ENCODE measurements at regions of chr3 and their contacts with region 1.

Region 1: GRCh38 chr3:171284308-171285075 is 175.7 kb downstream of the TNIK start:
- DNase-seq: peak in 1 of 2 donors; percentile 86
- H3K4me3 ChIP-seq: no peak overlapping the region
- H3K27ac ChIP-seq: peak overlapping the region; percentile 75 to 83
- H3K4me1 ChIP-seq: peaks cover 0 to 28% of the 10 kb centered on the region in 2 donors
- H3K27me3 ChIP-seq: no peaks in the 10 kb centered on the region
- CTCF ChIP-seq: no peak

Region 2: DNA sequence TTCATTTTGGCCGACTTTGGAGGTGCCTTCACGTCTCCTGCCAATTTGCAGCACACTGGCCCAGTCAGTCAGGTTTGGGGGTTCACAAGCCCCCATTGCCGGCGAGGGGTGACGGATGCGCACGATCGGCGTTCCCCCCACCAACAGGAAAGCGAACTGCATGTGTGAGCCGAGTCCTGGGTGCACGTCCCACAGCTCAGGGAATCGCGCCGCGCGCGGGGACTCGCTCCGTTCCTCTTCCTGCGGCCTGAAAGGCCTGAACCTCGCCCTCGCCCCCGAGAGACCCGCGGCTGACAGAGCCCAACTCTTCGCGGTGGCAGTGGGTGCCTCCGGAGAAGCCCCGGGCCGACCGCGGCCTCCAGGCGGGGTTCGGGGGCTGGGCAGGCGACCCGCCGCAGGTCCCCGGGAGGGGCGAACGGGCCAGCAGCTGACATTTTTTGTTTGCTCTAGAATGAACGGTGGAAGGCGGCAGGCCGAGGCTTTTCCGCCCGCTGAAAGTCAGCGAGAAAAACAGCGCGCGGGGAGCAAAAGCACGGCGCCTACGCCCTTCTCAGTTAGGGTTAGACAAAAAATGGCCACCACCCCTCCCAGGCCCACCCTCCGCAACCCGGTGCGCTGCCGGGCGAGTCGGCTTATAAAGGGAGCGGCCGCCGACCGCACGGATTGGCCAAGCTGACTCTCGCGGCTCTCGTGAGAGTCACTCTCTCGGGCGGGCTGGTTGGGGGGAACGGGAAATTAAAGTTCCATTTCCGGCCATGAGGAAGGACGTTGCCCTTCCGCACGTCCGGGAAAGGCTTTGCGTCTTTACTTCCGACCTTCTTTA is 1519.8 kb before region 1 on chr3 and contains the start of gene TERC:
- intact Hi-C with region 1: loop called (anchors 10 kb)
- DNase-seq: peak; percentile 77 to 98
- H3K4me3 ChIP-seq: peak within 1 kb of the TSS; percentile 75 to 83
- H3K27ac ChIP-seq: peak within 1 kb of the TSS; percentile 96 to 97
- H3K4me1 ChIP-seq: peaks cover 3 to 8% of the 10 kb centered on the region in 2 donors
- H3K27me3 ChIP-seq: no peaks in the 10 kb centered on the region
- CTCF ChIP-seq: no peak
- total RNA-seq, gene TERC: 260 TPM

Region 3: DNA sequence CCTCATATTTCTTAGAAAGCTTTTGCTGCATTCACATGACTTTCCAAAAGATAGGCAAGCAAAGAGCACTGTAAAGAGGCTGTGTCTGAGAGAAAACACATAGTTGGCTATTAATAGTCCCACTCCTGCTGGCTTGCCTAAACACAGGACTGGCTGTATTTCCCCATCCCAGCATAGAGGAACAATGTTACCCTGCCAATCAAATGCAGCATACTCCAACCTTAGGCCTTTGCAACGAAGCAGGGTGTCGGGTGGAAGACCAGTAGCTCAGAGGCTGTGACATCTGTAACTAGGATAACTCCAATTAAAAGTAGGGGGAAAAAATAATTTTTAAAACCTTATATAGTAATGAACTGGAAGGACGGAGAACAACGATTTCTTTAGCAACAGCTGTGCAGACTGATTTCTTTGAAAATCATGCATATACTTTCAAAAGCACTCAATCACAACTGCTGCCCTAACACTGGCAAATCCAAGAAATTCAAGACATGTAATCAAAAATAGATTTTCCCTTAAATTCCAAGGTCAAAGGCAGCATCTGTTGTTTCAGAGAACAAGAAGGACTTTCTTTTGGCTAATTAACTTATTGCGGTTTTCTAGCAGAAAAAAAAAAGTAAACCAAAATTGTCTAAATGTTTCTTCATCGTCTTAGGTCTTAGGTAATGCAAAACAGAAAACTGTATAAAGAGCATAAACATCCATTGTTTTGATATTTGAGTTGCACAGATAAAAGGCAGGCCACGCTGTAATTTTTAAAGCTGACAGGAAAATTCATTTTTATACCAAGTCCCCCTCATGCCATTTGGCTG is 36.5 kb after region 1 on chr3:
- intact Hi-C with region 1: loop called (anchors 5 kb)
- DNase-seq: no peak
- H3K4me3 ChIP-seq: peak overlapping the region in 1 of 2 donors; percentile 11
- H3K27ac ChIP-seq: peak overlapping the region; percentile 20 to 30
- H3K4me1 ChIP-seq: peaks cover 2 to 6% of the 10 kb centered on the region in 2 donors
- H3K27me3 ChIP-seq: no peaks in the 10 kb centered on the region
- CTCF ChIP-seq: no peak

Region 4: DNA sequence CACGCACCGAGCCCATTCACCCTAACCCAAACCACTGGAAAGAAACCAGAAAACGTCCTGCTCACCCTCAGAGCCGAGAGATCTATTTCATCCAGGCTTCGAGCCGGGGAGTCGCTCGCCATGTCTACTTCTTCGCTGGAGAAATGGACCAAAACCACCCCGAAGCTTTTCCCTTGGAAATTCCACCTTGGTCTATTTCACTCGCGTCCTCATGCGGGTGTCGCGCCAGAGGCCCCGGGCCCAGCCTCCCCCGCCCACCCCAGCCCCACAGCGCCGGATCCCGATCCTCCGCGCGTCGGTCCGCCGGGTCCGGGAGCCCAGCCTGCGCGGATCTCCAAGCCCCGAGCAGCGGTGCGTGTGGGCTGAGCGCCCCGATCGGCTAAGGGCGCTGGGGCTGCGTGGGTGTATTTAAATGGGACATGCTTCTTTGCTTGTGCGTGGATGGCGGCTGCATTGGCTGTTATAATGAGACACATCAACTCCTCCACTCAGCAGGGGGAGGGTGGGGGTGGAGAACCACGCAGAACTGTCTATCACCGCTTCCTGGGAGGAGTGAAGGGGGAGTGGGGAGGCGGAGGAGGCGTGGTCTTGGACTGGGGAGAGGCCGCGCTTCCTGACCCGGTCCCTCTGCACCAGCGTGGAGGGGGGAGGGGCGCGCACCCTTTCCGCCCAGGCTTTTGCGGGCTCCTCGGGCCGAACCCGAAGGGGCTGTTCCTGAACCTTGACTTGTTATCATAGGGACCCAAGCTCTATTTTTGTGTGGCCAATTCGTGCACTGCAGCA is 175.6 kb after region 1 on chr3 and contains the start of gene TNIK:
- intact Hi-C with region 1: loop called (anchors 10 kb)
- DNase-seq: peak; percentile 80 to 94
- H3K4me3 ChIP-seq: peak within 1 kb of the TSS; percentile 73 to 93
- H3K27ac ChIP-seq: peak within 1 kb of the TSS; percentile 54 to 66
- H3K4me1 ChIP-seq: peaks cover 0 to 4% of the 10 kb centered on the region in 2 donors
- H3K27me3 ChIP-seq: no peaks in the 10 kb centered on the region
- CTCF ChIP-seq: peak in 1 of 3 experiments; percentile 3
- total RNA-seq, gene TNIK: 0.75 TPM